Activated CD4-positive, alpha-beta memory T cell treated with anti-CD3 and anti-CD28 coated beads for 36 hours (primary cell): ENCODE measurements at regions of chr3 and their contacts with region 1.

Region 1: DNA sequence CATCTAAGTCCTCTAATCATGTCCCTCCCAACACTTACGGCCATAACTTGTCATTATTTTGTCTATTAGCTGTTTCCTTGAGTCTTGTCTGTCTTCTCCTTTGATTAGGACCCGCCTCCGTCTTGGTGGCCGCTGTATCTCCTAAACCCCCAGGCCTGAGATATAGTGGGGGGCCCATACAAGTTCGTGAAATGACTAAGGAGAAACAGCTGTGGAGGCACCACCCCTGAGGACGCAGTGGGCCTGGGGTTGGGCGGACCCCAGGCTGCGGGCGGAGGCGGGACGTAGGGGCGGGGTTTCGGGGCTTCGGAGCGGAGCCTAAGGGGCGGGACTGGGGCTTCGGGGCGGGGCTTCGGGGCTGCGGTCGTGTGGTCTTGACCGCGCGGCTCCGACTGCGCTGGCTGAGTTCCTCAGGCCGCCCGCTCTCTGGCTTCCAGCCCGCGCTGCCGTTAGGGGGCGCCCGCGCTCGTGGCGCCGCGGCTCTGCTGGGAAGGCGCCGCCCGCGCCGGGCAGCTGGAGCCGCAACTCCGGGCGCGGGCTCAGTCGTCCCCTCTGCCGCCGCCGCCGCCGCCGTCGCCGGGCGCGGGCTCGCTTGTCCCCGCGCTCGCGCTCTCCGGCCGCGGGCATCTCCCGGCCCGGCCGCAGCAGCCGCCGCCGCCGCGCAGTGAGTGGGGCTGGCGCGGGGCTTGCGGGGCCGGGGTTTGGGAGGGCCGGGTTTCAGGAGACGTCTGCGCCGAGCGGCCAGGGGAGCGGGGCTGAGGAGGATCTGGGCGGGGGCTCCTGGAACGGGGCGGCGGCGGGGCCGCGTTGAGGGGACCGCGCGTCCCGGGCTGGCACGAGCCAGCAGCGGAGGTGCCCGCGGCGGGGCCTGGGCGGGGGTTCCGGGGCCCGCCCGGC is at the start of gene KCTD6:
- DNase-seq: peak; percentile 90
- H3K4me3 Mint-ChIP-seq: peak within 1 kb of the TSS; percentile 90
- H3K27ac Mint-ChIP-seq: peak within 1 kb of the TSS; percentile 77
- H3K4me1 Mint-ChIP-seq: peaks cover 52% of the 10 kb centered on the region
- H3K27me3 Mint-ChIP-seq: peaks cover 3% of the 10 kb centered on the region
- total RNA-seq, gene KCTD6: 8.0 to 8.6 TPM

Region 2: DNA sequence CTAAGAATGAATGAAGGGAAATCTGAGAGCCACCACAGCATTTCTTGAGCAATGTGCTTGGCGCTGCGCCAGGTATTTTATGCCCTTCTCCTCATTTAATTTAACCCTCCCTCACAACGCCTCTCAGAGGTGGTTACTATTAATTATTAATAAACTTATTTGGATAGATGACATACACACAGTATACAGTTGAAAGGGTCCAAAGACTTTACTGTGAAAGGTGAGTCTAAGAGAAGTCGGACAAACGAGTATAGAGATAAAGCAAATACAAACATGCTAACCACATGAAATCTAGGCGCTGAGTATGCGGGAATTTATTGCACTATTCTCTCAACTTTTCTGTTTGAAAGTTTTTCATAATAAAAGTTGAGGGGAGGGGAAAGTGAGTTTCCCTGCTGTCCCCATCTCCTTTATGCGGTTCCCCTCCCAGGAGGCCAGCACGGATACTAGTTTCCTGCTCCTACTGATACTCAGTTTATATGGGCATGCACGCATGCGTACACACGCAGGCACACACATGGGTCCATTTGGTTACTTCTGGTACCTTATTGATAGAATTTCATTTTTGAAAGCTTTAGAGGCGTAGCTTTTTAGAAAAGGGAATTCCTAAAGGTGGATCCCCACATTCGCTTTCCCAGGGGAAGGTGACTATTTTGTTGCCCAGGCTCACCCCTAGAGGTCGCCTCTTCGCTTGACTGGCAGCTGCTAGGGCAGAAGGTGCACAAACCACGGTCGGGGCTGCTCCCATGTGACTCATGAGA is 28.4 kb before region 1 on chr3:
- CTCF ChIA-PET with region 1: interaction called, 21 read pairs
- POLR2A ChIA-PET with region 1: interaction called, 3 read pairs
- intact Hi-C with region 1: loop called (anchors 1 kb)
- DNase-seq: peak; percentile 90
- H3K4me3 Mint-ChIP-seq: no peak overlapping the region
- H3K27ac Mint-ChIP-seq: peak overlapping the region; percentile 54
- H3K4me1 Mint-ChIP-seq: peaks cover 17% of the 10 kb centered on the region
- H3K27me3 Mint-ChIP-seq: no peaks in the 10 kb centered on the region

Region 3: DNA sequence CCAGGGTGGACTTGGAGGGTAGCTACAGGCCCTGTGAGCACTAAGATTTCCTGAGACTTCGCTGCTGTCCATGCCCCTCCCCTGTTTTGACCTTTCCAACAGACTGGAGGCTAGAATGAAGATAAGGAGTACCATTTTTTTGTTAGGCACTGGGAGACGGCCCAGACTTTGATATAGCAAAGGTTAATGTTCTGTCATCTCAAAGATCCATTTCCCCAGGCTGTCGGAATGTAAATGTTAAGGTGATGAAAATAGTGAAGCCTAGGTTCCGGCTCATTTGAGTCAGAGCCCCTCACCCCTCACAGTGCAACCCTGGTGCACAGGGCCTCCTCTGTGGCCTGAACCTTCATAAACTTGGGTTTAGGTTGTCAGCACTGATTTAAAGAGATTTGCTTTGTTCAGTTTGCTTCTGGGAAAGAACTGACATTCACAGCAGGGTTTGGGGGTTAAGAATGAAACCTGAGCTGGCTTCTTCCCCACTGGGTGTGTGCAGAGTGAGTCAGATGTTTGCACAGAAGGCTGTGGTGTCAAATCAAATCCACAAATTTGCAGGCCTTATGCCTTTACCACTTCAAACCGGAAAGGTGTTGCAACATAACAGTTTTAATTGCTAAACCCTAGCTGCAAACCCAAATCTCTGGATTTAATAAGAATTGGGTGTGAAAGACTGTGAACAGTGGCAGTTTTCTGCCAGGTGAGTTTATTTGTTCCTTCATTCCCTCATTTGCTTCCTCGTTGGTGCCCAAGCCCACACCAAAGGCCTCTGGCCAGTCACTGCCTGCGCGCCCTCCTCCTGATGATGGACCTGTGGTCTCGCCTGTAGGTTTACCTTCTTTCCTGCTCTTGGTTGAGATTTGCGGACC is 20.5 kb before region 1 on chr3:
- CTCF ChIA-PET with region 1: interaction called, 18 read pairs
- POLR2A ChIA-PET with region 1: interaction called, 7 read pairs
- intact Hi-C with region 1: loop called (anchors 1 kb)
- DNase-seq: peak; percentile 80
- H3K4me3 Mint-ChIP-seq: no peak overlapping the region
- H3K27ac Mint-ChIP-seq: peak overlapping the region; percentile 86
- H3K4me1 Mint-ChIP-seq: peaks cover 34% of the 10 kb centered on the region
- H3K27me3 Mint-ChIP-seq: no peaks in the 10 kb centered on the region

Region 4: GRCh38 chr3:58507356-58508078 is 15.8 kb after region 1 on chr3:
- CTCF ChIA-PET with region 1: no interaction called
- POLR2A ChIA-PET with region 1: no interaction called
- intact Hi-C with region 1: no loop called
- DNase-seq: no peak
- H3K4me3 Mint-ChIP-seq: no peak overlapping the region
- H3K27ac Mint-ChIP-seq: no peak overlapping the region
- H3K4me1 Mint-ChIP-seq: no peaks in the 10 kb centered on the region
- H3K27me3 Mint-ChIP-seq: no peaks in the 10 kb centered on the region